Mucosa of descending colon (tissue), 3 donors: ENCODE measurements at regions of chr10 and their contacts with region 1.

Region 1: DNA sequence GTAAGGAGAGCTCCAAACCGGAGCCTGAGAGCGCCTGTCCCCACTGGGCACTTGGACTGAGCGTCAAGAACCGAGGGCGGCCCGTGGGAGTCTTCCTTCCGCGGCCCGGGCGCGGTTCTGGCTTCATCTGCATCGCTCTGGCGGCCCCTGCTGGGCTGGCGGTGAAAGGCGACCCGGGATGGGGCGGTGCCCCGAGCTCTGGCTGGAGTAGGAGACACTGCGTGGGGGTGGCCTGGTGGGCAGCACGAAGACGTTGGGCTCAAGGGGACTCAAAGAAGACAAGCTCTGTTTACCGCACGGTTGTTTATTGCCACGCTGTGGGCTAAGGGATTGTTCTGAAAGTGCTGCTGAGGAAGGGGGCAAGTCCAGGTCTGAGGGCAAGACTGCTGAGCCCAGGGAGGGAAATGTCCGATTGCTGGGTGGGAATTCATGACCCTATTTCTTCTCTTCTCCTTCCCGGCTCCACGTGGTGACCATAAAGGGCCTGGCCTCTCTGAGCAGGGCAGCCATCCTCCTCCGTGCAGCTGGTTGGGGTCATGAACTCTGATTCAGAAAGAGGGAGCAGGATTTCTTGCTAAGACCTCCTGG is 29.8 kb downstream of the PLAU start:
- DNase-seq: peak; percentile 89 to 92 (median 91)
- ATAC-seq: peak; percentile 98
- H3K4me3 ChIP-seq: no peak overlapping the region
- H3K4me1 ChIP-seq: no peaks in the 10 kb centered on the region
- CTCF ChIP-seq: peak; percentile 83

Region 2: DNA sequence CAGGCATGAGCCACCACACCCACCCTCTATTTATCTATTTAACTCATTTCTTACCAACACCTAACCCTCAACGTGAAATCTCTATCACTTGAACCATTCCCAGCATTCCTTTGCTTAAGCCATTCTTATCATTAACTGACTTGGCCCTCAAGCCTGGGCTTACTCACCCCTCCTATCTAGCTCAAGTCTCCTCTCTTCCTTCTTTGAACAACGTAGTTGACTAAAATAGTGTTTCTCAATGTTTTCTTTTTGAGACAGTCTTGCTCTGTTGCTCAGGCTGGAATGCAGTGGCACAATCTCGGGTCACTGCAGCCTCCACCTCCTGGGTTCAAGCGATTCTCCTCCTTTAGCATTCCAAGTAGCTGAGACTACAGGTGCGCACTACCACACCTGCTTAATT is 533.9 kb before region 1 on chr10:
- intact Hi-C with region 1: no loop called
- DNase-seq: no peak
- ATAC-seq: no peak
- H3K4me3 ChIP-seq: no peak overlapping the region
- H3K4me1 ChIP-seq: peaks cover 2% of the 10 kb centered on the region
- CTCF ChIP-seq: no peak

Region 3: GRCh38 chr10:73894245-73894971 is 46.3 kb before region 1 on chr10:
- intact Hi-C with region 1: loop called (anchors 5 kb)
- DNase-seq: no peak
- ATAC-seq: no peak
- H3K4me3 ChIP-seq: no peak overlapping the region
- H3K4me1 ChIP-seq: no peaks in the 10 kb centered on the region
- CTCF ChIP-seq: no peak

Region 4: GRCh38 chr10:74047868-74048267 is 107.1 kb after region 1 on chr10:
- intact Hi-C with region 1: no loop called
- DNase-seq: no peak
- ATAC-seq: peak; percentile 17
- H3K4me3 ChIP-seq: no peak overlapping the region
- H3K4me1 ChIP-seq: no peaks in the 10 kb centered on the region
- CTCF ChIP-seq: no peak